ENCODE measurements at regions of chr1 and their contacts with region 1.

Region 1: GRCh38 chr1:153670859-153671627 is at the start of gene ILF2:
- DNase-seq: peak; percentile 89 to 97 (median 96)
- H3K4me3 ChIP-seq: peak within 1 kb of the TSS; percentile 61 to 96 (median 86)
- H3K27ac ChIP-seq: peak within 1 kb of the TSS; percentile 61 to 96 (median 87)
- H3K27me3 ChIP-seq: no peaks in the 10 kb centered on the region
- CTCF ChIP-seq: peak in 37 of 56 donors; percentile 3 to 71 (median 35)
- total RNA-seq, gene ILF2: 45.0 to 84.5 (median 66.7) TPM

Region 2: DNA sequence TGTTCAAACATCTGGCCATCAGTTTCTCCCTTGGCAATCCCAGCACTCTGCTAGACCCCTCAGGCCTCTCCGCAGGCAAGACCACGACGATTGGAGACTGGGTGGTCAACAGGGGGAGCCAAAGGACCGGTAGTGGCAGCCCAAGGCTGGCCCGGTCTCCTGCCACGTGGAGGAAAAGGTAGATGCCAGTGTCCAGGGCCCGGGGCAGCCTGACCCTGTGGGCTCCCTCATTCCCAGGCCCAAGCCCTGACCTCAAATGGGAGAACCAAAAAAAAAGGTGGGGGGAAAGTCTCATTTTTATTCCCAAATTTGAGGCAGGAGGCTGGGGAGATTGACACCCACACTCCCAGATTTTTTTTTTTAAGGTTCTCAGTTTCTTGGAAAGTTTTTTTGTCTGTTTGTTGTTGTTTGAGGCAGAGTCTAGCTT is 160.0 kb before region 1 on chr1:
- intact Hi-C with region 1: loop called in 1 of 2 experiments (anchors 10 kb)
- DNase-seq: peak; percentile 41 to 83 (median 74)
- H3K4me3 ChIP-seq: no peak overlapping the region
- H3K27ac ChIP-seq: no peak overlapping the region
- H3K27me3 ChIP-seq: no peaks in the 10 kb centered on the region
- CTCF ChIP-seq: peak; percentile 34 to 96 (median 86)

Region 3: DNA sequence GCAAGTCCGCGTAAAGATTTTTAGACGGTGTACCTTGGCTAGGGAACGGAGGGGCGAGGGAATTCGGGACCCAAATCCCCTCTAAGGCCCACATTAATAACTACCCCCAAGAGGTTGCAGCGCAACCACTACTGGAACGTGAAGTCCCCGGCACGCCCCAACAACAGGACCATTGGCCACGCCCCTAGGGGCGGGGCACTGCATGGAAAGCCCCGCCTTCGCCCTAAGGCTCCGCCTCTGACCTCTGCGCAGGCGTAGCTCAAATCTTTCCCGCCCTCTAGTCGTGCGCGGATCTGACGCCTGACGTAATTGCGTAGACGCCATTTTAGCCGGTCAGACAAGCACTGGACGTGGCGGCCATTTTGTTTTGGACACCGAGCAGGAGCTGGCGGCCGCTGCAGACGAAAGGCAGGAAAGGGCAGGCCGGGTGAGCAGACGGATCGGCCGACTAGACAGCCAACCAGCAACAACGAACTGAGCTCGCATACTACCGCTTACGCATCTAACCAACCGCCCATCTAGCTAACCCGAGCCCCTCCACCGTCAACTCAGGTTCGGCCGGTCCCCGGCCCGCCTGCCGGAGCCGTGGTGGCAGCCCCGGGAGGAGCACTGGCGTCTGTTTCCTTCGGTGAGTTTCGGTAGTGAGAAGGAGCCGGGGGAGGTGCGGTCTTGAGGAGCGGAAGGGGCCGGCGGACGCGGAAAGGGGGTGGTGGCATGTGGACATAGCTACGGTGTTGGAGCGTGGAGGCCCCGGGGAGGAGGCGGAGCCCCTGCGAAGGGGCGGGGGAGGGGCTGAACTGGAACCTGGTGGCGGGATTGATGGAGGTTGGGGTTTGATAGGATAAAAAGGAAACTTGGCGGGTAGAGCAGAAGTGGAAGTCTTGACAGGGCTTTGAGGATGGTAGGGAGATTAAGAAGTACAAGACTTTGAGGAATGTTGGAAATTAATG is 37.1 kb before region 1 on chr1 and contains the start of gene CHTOP:
- intact Hi-C with region 1: loop called in 1 of 2 experiments (anchors 5 kb)
- DNase-seq: peak; percentile 97 to 99 (median 99)
- H3K4me3 ChIP-seq: peak within 1 kb of the TSS; percentile 72 to 100 (median 93)
- H3K27ac ChIP-seq: peak within 1 kb of the TSS; percentile 80 to 100 (median 99)
- H3K27me3 ChIP-seq: no peaks in the 10 kb centered on the region
- CTCF ChIP-seq: peak in 36 of 56 donors; percentile 2 to 58 (median 24)
- total RNA-seq, gene CHTOP: 62.0 to 109 (median 76.4) TPM

Region 4: GRCh38 chr1:153727463-153728304 is 56.6 kb after region 1 on chr1 and contains the start of gene INTS3:
- intact Hi-C with region 1: loop called (anchors 2 to 5 kb)
- DNase-seq: peak; percentile 98 to 100 (median 100)
- H3K4me3 ChIP-seq: peak within 1 kb of the TSS; percentile 61 to 99 (median 91)
- H3K27ac ChIP-seq: peak within 1 kb of the TSS; percentile 71 to 99 (median 96)
- H3K27me3 ChIP-seq: no peaks in the 10 kb centered on the region
- CTCF ChIP-seq: peak in 26 of 56 donors; percentile 7 to 50 (median 26)
- total RNA-seq, gene INTS3: 56.8 to 103 (median 74.9) TPM

Region 5: GRCh38 chr1:153775458-153776327 is 104.7 kb after region 1 on chr1:
- intact Hi-C with region 1: loop called (anchors 5 to 10 kb)
- DNase-seq: peak in 5 of 10 donors; percentile 42 to 72 (median 50)
- H3K4me3 ChIP-seq: peak overlapping the region; percentile 54 to 90 (median 74)
- H3K27ac ChIP-seq: peak overlapping the region; percentile 5 to 92 (median 82)
- H3K27me3 ChIP-seq: no peaks in the 10 kb centered on the region
- CTCF ChIP-seq: peak in 2 of 56 donors; percentile 2 to 12

Region 6: DNA sequence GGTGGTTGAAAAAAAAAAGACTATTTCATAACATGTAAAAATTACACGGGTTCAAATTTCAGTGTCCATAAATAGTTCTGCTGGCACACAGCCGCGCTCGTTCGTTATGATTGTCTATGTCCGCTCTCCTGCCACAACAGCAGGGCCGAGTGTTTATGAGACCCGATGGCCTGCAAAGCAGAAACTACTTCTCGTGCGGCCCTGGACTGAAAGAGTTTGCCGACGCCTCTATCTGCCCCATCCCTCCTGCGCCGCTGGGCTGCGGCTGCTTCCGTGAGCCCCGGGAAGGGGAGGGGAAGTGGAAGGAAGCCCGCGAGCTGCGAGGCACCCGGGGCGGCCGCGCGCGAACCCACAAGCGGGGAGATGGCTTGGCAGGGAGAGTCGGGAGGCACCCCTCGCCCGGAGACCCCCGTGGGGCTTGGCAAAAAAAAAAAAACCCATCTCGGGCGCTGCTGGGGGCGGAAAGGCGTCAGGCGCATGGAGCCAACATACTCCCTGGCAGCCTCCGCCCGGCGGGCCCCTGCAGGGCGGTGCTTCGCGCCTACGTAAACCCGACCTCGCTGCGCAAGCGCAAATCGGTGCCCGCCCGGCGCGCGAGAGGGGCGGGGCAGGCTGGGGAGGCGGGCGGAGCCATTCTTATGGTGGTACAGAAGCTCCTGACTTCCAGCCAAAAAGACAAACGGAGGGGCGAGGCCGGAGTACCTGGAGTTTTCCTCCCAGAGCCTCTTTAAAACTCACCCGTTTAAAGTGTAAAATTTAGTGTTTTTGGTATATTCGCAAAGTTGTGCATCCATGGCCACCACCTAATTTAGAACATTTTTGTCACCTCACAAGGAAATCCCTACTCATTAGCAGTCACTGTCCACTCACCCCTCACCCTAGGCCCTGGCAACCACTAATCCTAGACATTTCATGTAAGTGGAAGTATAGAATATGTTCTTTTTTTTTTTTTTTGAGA is 112.5 kb after region 1 on chr1:
- intact Hi-C with region 1: loop called (anchors 5 to 10 kb)
- DNase-seq: peak; percentile 81 to 96 (median 86)
- H3K4me3 ChIP-seq: peak overlapping the region; percentile 52 to 100 (median 78)
- H3K27ac ChIP-seq: peak overlapping the region; percentile 76 to 100 (median 97)
- H3K27me3 ChIP-seq: no peaks in the 10 kb centered on the region
- CTCF ChIP-seq: peak in 38 of 56 donors; percentile 7 to 54 (median 24)